ENCODE measurements at regions of chr4 and their contacts with region 1.

Region 1: GRCh38 chr4:40228497-40229365 is 31.9 kb downstream of the RHOH start:
- DNase-seq: peak; percentile 24
- H3K4me3 Mint-ChIP-seq: peak overlapping the region; percentile 53
- H3K27ac Mint-ChIP-seq: peak overlapping the region; percentile 85
- H3K4me1 Mint-ChIP-seq: peaks cover 94% of the 10 kb centered on the region
- H3K27me3 Mint-ChIP-seq: no peaks in the 10 kb centered on the region

Region 2: GRCh38 chr4:40038972-40039371 is 189.8 kb before region 1 on chr4:
- CTCF ChIA-PET with region 1: no interaction called
- intact Hi-C with region 1: no loop called
- DNase-seq: no peak
- H3K4me3 Mint-ChIP-seq: no peak overlapping the region
- H3K27ac Mint-ChIP-seq: no peak overlapping the region
- H3K4me1 Mint-ChIP-seq: no peaks in the 10 kb centered on the region
- H3K27me3 Mint-ChIP-seq: no peaks in the 10 kb centered on the region

Region 3: GRCh38 chr4:40193016-40193571 is 35.6 kb before region 1 on chr4:
- CTCF ChIA-PET with region 1: interaction called, 3 read pairs
- intact Hi-C with region 1: loop called (anchors 5 kb)
- DNase-seq: peak; percentile 52
- H3K4me3 Mint-ChIP-seq: peak overlapping the region; percentile 85
- H3K27ac Mint-ChIP-seq: peak overlapping the region; percentile 98
- H3K4me1 Mint-ChIP-seq: peaks cover 67% of the 10 kb centered on the region
- H3K27me3 Mint-ChIP-seq: no peaks in the 10 kb centered on the region

Region 4: DNA sequence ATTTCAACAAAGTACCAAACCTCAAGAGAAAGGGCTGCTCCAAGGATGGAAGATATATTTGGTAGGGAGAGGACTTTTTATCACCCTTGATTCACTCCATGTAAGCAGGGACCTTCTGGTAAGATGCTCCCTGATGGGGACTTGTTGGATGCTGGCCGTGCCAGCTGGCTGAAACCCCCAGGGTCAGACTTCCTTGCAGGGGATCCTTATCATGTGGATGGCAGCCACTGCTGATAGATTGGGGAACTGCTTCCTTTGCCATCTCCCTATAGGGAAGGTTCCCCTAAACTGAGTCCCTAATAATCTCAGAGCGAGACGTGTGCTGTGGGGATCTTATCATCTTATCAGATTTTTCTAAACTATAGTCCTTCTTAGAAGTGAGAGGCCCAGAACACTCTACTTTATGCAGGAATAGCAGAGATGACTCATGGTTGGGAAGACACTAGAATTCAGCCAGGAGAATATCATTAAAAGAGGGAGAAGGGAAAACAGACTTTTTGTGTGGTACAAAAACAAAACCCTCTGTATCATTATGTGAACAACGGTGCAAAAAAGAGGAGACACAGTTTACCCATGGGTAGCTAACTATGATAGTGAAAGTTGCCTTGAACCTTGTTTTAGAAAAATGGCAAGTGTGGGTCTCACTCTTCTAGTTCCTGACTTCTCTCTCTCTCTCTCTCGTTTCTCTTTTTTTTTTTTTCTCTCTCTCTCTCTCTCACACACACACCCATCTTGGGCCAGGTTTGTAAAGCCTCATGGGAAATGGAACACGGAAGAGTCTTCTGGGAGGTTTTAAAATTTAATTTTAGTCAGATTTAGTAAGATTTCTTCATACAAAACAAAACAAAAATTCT is 15.8 kb before region 1 on chr4:
- CTCF ChIA-PET with region 1: interaction called, 13 read pairs
- intact Hi-C with region 1: loop called (anchors 1 kb)
- DNase-seq: peak; percentile 11
- H3K4me3 Mint-ChIP-seq: peak overlapping the region; percentile 64
- H3K27ac Mint-ChIP-seq: peak overlapping the region; percentile 93
- H3K4me1 Mint-ChIP-seq: peaks cover 87% of the 10 kb centered on the region
- H3K27me3 Mint-ChIP-seq: no peaks in the 10 kb centered on the region

Region 5: DNA sequence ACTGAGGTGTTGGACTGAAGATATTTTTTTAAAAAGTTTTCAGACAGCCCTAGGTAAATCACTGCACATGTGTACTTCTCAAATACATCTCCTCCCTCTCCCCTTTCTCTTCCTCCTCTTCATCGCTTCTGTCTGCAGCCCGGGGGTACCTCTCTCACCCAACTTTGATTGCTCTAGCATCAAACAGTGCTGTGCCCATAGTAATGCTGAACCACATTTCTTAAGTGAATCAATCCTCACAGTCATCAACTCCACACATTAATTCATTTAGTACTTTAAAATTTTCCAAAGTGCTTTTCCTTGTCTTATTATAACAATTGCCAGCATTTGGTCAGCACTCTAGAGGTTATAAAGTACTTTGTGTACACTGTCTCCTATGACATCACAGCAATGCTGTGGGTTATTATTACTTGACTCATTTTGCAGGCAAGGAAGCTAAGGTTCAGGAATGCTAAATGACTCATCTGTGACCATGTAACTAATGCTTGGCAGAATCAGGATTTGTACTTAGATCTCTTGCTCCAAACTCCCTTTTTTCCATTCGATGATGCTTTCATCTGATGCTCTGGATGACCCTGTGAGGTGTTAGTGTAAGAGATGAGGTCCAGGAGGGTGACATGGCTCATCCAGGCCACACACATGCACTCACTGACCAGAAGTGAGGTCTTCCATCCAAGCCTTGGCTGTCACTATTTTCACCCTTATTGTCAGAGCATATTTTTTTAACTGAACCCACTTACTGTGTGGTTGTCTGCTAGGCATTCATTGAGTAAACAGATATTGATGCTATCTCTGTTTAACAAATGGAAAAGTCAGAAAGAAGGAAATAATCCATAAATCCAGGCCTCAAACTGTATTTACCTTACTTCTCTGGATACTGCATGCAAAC is 26.9 kb after region 1 on chr4:
- CTCF ChIA-PET with region 1: interaction called, 3 read pairs
- intact Hi-C with region 1: loop called (anchors 1 kb)
- DNase-seq: no peak
- H3K4me3 Mint-ChIP-seq: peak overlapping the region; percentile 0
- H3K27ac Mint-ChIP-seq: peak overlapping the region; percentile 75
- H3K4me1 Mint-ChIP-seq: peaks cover 77% of the 10 kb centered on the region
- H3K27me3 Mint-ChIP-seq: no peaks in the 10 kb centered on the region

Region 6: DNA sequence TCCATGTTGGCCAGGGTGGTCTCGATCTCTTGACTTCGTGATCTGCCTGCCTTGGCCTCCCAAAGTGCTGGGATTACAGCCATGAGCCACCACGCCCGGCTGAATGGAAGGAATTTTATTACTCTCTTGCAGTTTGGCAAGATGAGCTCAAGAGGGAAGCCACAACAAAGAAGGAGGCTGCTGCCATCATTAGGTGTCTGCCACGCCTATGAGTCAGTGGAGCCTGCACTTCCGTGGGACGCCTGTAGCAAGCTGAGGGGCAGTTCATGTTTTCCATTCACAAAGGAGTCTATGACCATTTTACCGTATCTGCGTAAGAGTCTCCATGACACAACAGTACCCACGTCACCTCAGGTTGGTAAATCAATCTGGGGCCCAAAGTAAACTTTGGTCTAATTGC is 55.2 kb after region 1 on chr4:
- CTCF ChIA-PET with region 1: interaction called, 3 read pairs
- intact Hi-C with region 1: loop called (anchors 1 kb)
- DNase-seq: peak; percentile 94
- H3K4me3 Mint-ChIP-seq: peak overlapping the region; percentile 19
- H3K27ac Mint-ChIP-seq: peak overlapping the region; percentile 94
- H3K4me1 Mint-ChIP-seq: peaks cover 70% of the 10 kb centered on the region
- H3K27me3 Mint-ChIP-seq: no peaks in the 10 kb centered on the region

Region 7: DNA sequence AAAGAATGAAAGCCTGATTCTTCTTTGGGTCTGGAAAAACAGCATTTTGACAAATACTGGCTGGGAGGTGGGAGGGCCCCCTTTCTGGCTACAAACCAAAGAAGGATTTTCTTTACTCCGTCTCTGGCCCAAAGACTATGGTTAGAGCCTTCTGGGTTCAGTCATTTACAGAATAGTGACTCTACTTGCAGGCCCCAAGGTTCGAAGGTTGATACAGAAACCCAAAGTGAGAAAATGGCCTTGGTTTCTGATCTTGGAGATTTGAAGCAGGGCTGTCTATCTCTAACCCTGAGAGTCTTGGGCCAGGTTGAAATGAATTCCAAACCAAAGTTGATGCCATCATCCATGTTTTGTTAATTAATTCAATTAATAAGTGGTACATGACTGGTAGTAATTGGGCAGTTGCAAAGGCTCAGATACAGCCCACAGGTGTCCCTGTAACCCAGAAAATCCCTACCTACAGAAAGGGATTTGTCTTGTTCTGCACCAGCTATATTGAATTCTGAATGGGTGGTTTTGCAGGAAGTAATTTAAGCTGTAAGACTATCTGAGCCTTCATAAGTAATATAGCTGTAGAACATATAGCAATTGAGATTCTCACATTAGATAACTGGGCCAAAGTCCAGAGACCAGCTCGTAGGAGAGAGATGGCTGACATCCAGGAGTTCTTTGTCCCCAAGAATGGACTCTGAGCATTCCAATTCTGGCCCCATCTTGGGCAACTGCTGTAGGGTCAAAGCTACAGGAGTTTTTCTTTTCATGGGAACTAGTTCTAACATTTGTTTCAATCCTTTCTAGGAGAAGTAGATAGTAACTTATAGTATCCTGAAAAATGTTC is 140.9 kb after region 1 on chr4:
- CTCF ChIA-PET with region 1: no interaction called
- intact Hi-C with region 1: no loop called
- DNase-seq: no peak
- H3K4me3 Mint-ChIP-seq: no peak overlapping the region
- H3K27ac Mint-ChIP-seq: no peak overlapping the region
- H3K4me1 Mint-ChIP-seq: no peaks in the 10 kb centered on the region
- H3K27me3 Mint-ChIP-seq: no peaks in the 10 kb centered on the region